ENCODE measurements at regions of chr15 and their contacts with region 1.

Region 1: GRCh38 chr15:95252404-95252803 is 1021.0 kb downstream of the MCTP2 start:
- DNase-seq: peak; percentile 82
- H3K4me3 ChIP-seq: no peak overlapping the region
- H3K27ac ChIP-seq: peak overlapping the region; percentile 59
- H3K4me1 ChIP-seq: peaks cover 32% of the 10 kb centered on the region
- H3K27me3 ChIP-seq: no peaks in the 10 kb centered on the region
- CTCF ChIP-seq: no peak
- POLR2A ChIP-seq: no peak

Region 2: GRCh38 chr15:93870583-93870982 is 1381.8 kb before region 1 on chr15:
- CTCF ChIA-PET with region 1: no interaction called
- POLR2A ChIA-PET with region 1: no interaction called
- dilution Hi-C with region 1: no loop called
- intact Hi-C with region 1: no loop called
- DNase-seq: no peak
- H3K4me3 ChIP-seq: no peak overlapping the region
- H3K27ac ChIP-seq: no peak overlapping the region
- H3K4me1 ChIP-seq: no peaks in the 10 kb centered on the region
- H3K27me3 ChIP-seq: no peaks in the 10 kb centered on the region
- CTCF ChIP-seq: no peak
- POLR2A ChIP-seq: no peak

Region 3: DNA sequence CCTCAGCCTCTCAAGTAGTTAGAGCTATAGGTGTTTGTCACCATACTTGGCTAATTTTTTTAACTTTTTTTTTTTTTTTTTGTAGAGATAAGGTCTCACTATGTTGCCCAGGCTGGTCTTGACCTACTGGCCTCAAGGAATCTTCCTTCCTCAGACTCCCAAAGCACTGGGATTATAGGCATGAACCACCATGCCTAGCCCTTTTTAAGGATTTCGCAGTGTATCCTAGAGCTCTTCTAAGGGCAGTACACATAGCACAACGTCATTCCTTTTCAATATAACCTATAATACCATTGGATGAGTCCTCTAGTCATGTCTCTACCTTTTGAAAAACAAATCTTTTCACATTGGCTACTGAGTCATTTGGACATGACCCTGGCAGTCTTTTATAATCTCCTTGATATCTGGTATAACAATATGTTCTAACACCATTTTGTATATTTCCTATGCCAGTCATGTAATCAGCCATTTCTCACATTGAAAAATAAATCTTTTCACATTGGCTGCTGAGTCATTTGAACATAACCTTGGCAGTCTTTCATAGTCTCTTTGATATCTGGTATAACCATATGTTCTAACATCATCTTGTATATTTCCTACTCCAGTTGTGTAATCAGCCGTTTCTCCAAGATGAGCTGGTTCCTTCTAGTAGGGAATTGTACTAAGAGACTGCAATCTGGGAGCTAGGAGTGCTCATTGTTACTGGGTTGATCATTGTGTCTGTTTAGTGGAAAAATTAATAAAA is 76.3 kb before region 1 on chr15:
- CTCF ChIA-PET with region 1: interaction called, 5 read pairs
- POLR2A ChIA-PET with region 1: no interaction called
- dilution Hi-C with region 1: no loop called
- intact Hi-C with region 1: loop called (anchors 1 kb)
- DNase-seq: peak; percentile 94
- H3K4me3 ChIP-seq: no peak overlapping the region
- H3K27ac ChIP-seq: peak overlapping the region; percentile 95
- H3K4me1 ChIP-seq: peaks cover 30% of the 10 kb centered on the region
- H3K27me3 ChIP-seq: no peaks in the 10 kb centered on the region
- CTCF ChIP-seq: no peak
- POLR2A ChIP-seq: no peak

Region 4: GRCh38 chr15:95235033-95235432 is 17.4 kb before region 1 on chr15:
- CTCF ChIA-PET with region 1: no interaction called
- POLR2A ChIA-PET with region 1: no interaction called
- dilution Hi-C with region 1: no loop called
- intact Hi-C with region 1: no loop called
- DNase-seq: no peak
- H3K4me3 ChIP-seq: no peak overlapping the region
- H3K27ac ChIP-seq: no peak overlapping the region
- H3K4me1 ChIP-seq: no peaks in the 10 kb centered on the region
- H3K27me3 ChIP-seq: no peaks in the 10 kb centered on the region
- CTCF ChIP-seq: no peak
- POLR2A ChIP-seq: no peak

Region 5: DNA sequence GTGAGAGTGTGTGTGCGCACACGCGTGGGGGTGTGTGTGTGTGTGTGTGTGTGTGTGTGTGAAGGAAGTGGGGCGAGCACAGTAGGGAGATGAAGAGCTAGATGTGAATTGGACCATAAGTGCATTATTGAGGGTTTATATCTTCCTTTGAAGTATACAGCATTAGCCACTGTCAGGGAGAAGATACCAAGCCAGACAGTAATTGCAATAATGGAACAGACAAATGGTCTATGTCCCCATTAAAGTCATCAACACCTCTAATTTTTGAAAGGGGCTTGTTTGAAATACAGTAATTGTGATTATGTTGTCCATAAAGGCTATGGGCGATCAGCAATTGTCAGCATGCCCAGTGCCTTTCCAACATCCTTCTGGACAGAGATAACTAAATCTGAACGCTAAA is 648.9 kb after region 1 on chr15:
- CTCF ChIA-PET with region 1: no interaction called
- POLR2A ChIA-PET with region 1: no interaction called
- dilution Hi-C with region 1: no loop called
- intact Hi-C with region 1: no loop called
- DNase-seq: no peak
- H3K4me3 ChIP-seq: no peak overlapping the region
- H3K27ac ChIP-seq: no peak overlapping the region
- H3K4me1 ChIP-seq: no peaks in the 10 kb centered on the region
- H3K27me3 ChIP-seq: no peaks in the 10 kb centered on the region
- CTCF ChIP-seq: no peak
- POLR2A ChIP-seq: no peak